Naive thymus-derived CD4-positive, alpha-beta T cell (primary cell): ENCODE measurements at regions of chr1 and their contacts with region 1.

Region 1: DNA sequence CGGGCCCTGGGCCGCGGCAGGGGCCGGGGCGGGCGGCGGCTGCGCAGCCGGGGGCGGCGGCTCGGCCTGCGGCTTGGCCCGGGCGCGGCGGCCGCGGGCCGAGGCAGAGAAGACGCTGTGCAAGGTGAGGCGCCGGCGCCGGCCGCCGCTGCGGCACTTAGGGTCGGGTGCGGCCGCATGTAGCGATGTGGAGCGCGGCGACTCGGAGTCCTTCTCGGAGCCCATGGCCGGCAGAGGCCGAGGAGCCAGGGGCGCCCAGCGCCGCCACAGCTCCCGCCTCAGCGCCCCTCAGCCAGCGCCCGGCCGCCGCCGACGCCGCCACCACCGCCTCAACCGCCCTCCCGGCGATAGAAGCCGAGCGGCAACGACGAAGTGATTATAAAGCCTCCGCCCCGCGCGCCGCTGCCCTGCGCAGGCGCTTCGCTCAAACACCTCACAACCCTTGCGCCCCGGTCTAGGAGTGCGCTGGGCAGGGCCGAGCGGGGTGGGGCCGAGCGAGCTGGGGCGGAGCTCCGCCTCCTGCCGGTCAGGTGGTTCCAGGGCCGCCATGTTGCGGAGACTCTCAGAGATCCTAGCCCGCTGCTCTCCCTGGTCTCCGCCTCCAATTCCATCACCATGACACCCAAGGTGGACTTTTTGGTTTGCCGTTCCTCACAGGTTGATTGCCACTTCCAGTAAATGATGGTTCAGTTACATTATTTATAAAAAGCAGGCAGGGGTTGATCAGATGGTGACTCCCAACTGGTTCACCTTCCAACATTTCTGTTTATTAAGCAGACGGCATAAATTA is at the start of gene RNF19B:
- DNase-seq: peak; percentile 85 to 94 (median 90)
- ATAC-seq: peak; percentile 97
- H3K4me3 ChIP-seq: peak within 1 kb of the TSS; percentile 67
- H3K4me3 Mint-ChIP-seq: peak within 1 kb of the TSS; percentile 88 to 93 (median 91)
- H3K27ac ChIP-seq: peak within 1 kb of the TSS; percentile 74
- H3K27ac Mint-ChIP-seq: peak within 1 kb of the TSS; percentile 71 to 96 (median 90)
- H3K4me1 ChIP-seq: peaks cover 19 to 24% of the 10 kb centered on the region in 2 donors
- H3K4me1 Mint-ChIP-seq: peaks cover 23 to 50% (median 37%) of the 10 kb centered on the region in 7 donors
- H3K27me3 ChIP-seq: no peaks in the 10 kb centered on the region
- H3K27me3 Mint-ChIP-seq: peaks cover 0 to 3% (median 0%) of the 10 kb centered on the region in 5 donors
- total RNA-seq, gene RNF19B: 17.1 to 58.1 (median 39.2) TPM

Region 2: GRCh38 chr1:32893198-32894018 is 71.2 kb before region 1 on chr1:
- CTCF ChIA-PET with region 1: no interaction called
- POLR2A ChIA-PET with region 1: no interaction called
- intact Hi-C with region 1: no loop called
- DNase-seq: peak in 1 of 9 donors; percentile 41
- ATAC-seq: peak; percentile 33
- H3K4me3 ChIP-seq: no peak overlapping the region
- H3K4me3 Mint-ChIP-seq: peak overlapping the region; percentile 46 to 86 (median 60)
- H3K27ac ChIP-seq: no peak overlapping the region
- H3K27ac Mint-ChIP-seq: no peak overlapping the region
- H3K4me1 ChIP-seq: no peaks in the 10 kb centered on the region
- H3K4me1 Mint-ChIP-seq: peaks cover 5 to 11% (median 8%) of the 10 kb centered on the region in 7 donors
- H3K27me3 ChIP-seq: peaks cover 0 to 22% of the 10 kb centered on the region in 2 donors
- H3K27me3 Mint-ChIP-seq: peaks cover 56 to 65% (median 59%) of the 10 kb centered on the region in 5 donors

Region 3: GRCh38 chr1:32981003-32981901 is 16.6 kb after region 1 on chr1:
- CTCF ChIA-PET with region 1: interaction called, 8 read pairs
- POLR2A ChIA-PET with region 1: interaction called, 76 read pairs
- intact Hi-C with region 1: loop called (anchors 1 kb)
- DNase-seq: peak in 8 of 9 donors; percentile 51 to 73 (median 63)
- ATAC-seq: peak; percentile 95
- H3K4me3 ChIP-seq: peak overlapping the region; percentile 49
- H3K4me3 Mint-ChIP-seq: peak overlapping the region; percentile 65 to 93 (median 82)
- H3K27ac ChIP-seq: peak overlapping the region; percentile 84
- H3K27ac Mint-ChIP-seq: peak overlapping the region; percentile 91 to 99 (median 94)
- H3K4me1 ChIP-seq: peaks cover 11 to 26% of the 10 kb centered on the region in 2 donors
- H3K4me1 Mint-ChIP-seq: peaks cover 12 to 74% (median 26%) of the 10 kb centered on the region in 7 donors
- H3K27me3 ChIP-seq: no peaks in the 10 kb centered on the region
- H3K27me3 Mint-ChIP-seq: no peaks in the 10 kb centered on the region

Region 4: DNA sequence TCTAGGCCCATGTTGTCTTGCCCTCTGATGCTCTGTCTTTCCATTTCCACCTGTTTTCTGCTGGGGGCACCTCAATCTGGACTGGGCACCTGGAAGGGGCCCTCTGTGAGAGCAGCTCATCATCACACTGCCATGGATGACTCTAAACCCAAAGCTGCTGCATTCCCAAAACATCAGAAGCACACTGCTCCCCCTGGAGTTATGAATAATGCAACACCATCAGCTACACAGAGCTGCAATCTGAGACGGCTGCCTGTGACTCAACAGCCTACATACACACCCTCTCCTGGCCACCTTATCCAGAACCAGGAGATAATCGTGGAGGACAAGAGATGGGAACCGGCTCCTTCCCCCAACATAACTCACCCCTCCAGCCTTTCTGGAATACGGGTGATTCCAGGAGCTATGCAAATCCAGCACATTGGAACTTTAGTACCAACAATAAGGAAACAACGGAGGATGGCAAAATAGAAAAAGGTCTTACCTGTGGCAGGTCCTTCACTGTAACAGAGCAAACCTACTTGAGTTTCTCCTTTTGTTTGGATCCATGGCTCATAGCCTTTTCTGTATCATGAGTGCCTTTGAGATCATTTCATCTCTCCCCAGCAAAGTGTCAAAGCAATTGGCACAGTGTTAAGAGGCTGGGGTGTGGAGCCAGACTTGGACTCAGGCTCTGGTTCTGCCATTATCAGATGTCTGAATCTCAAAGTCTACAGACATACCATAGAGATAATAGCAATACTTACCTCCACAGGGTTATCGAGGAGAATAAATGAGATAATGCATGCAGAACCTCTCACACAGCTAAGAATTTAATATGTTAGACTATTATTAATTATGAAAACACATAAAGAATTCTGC is 42.8 kb after region 1 on chr1:
- CTCF ChIA-PET with region 1: interaction called, 3 read pairs
- POLR2A ChIA-PET with region 1: interaction called, 4 read pairs
- intact Hi-C with region 1: loop called in 1 of 2 experiments (anchors 2 kb)
- DNase-seq: peak in 2 of 9 donors; percentile 10 to 19
- ATAC-seq: peak; percentile 83
- H3K4me3 ChIP-seq: no peak overlapping the region
- H3K4me3 Mint-ChIP-seq: no peak overlapping the region
- H3K27ac ChIP-seq: no peak overlapping the region
- H3K27ac Mint-ChIP-seq: peak overlapping the region in 1 of 9 donors; percentile 9
- H3K4me1 ChIP-seq: no peaks in the 10 kb centered on the region
- H3K4me1 Mint-ChIP-seq: peaks cover 0 to 40% (median 3%) of the 10 kb centered on the region in 7 donors
- H3K27me3 ChIP-seq: no peaks in the 10 kb centered on the region
- H3K27me3 Mint-ChIP-seq: no peaks in the 10 kb centered on the region

Region 5: GRCh38 chr1:33080885-33081553 is 116.4 kb after region 1 on chr1 and contains the start of gene AZIN2:
- CTCF ChIA-PET with region 1: no interaction called
- POLR2A ChIA-PET with region 1: interaction called, 5 read pairs
- intact Hi-C with region 1: loop called (anchors 1 kb)
- DNase-seq: peak; percentile 94 to 99 (median 95)
- ATAC-seq: peak; percentile 99
- H3K4me3 ChIP-seq: peak within 1 kb of the TSS; percentile 68
- H3K4me3 Mint-ChIP-seq: peak within 1 kb of the TSS; percentile 81 to 88 (median 86)
- H3K27ac ChIP-seq: peak within 1 kb of the TSS; percentile 66
- H3K27ac Mint-ChIP-seq: peak within 1 kb of the TSS; percentile 6 to 91 (median 72)
- H3K4me1 ChIP-seq: peaks cover 14 to 15% of the 10 kb centered on the region in 2 donors
- H3K4me1 Mint-ChIP-seq: peaks cover 20 to 40% (median 35%) of the 10 kb centered on the region in 7 donors
- H3K27me3 ChIP-seq: no peaks in the 10 kb centered on the region
- H3K27me3 Mint-ChIP-seq: peaks cover 0 to 30% (median 0%) of the 10 kb centered on the region in 5 donors
- total RNA-seq, gene AZIN2: 5.3 to 9.6 (median 9.0) TPM

Region 6: DNA sequence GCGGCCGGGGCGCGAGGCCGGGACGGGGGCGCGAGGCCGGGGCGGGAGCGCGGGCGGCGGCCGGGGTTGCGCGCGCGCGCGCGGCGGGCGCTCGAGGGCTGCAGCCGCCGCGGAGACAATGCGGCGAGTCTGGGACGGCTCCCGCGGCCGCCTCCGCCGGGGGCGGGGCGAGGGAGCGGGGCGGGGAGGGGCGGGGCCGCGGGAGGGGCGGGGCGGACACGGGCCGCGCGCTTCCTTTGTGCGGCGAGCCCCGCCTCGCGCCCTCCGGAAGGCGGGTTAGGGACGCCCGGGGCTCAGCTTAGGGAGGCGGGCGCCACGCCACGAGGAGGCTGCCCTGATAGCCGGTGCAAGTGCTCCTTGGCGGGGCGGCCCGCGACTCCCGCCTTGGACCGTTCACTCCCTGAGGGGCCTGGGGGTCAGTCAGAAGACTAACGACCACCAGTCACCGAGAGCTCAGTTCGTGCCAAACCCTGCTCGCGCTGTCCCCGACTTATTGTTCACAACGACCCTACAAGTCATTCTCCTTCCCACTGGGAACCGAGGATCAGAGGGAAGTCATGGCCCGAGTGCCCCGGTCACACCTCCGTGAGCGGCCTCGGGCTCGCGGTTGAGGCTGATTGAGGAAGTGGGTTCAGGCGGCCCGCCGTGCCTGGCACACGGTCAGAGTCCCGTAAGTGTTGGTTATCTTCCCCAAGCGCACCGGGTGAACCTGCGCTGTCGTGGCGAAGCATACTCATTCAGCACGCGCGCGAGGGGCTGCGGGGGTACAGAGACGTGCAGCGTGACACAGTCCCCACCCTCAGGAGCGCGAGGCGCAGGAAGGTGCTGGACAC is 385.3 kb after region 1 on chr1:
- CTCF ChIA-PET with region 1: no interaction called
- POLR2A ChIA-PET with region 1: no interaction called
- intact Hi-C with region 1: loop called in 1 of 2 experiments (anchors 1 kb)
- DNase-seq: peak; percentile 64 to 85 (median 73)
- ATAC-seq: peak; percentile 93
- H3K4me3 ChIP-seq: peak overlapping the region; percentile 96
- H3K4me3 Mint-ChIP-seq: peak overlapping the region; percentile 89 to 95 (median 92)
- H3K27ac ChIP-seq: peak overlapping the region; percentile 69
- H3K27ac Mint-ChIP-seq: peak overlapping the region; percentile 54 to 91 (median 88)
- H3K4me1 ChIP-seq: peaks cover 23 to 25% of the 10 kb centered on the region in 2 donors
- H3K4me1 Mint-ChIP-seq: peaks cover 32 to 51% (median 46%) of the 10 kb centered on the region in 7 donors
- H3K27me3 ChIP-seq: no peaks in the 10 kb centered on the region
- H3K27me3 Mint-ChIP-seq: peaks cover 0 to 7% (median 0%) of the 10 kb centered on the region in 5 donors